Heart right ventricle (tissue), 16 donors: ENCODE measurements at regions of chr10 and their contacts with region 1.

Region 1: DNA sequence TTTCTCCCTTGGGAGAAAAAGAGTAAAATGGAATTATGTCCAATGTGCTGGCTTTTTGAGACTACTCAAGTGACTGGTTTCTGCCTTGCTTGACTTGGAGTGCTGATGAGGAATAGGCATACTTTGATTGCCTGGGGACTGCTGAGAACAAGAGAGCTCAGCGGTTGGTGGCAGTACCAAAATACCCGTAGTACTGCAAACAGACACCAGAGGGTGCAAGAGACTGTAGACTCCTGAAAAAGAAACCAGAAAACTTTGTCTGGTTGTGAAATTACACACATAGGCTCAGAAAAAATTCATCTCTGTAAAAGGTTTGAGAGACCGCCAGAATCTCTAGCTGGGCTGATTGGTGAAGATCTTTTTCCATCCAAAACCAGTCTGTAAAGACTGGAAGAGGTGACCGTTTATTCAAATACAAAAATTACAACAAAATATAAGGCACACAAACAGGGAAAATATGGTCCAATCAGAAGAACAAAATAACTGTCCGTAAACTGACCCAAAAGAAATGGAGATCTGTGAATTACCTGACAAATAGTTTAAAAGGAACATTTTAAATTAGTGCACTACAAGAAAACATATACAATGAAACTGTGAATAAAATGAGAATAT is 18.5 kb downstream of the BICC1 start:
- DNase-seq: peak in 1 of 2 donors; percentile 32
- ATAC-seq: no peak
- H3K4me3 ChIP-seq: no peak overlapping the region
- H3K27ac ChIP-seq: no peak overlapping the region
- H3K4me1 ChIP-seq: no peaks in the 10 kb centered on the region
- H3K27me3 ChIP-seq: no peaks in the 10 kb centered on the region
- CTCF ChIP-seq: peak; percentile 39 to 75 (median 64)

Region 2: DNA sequence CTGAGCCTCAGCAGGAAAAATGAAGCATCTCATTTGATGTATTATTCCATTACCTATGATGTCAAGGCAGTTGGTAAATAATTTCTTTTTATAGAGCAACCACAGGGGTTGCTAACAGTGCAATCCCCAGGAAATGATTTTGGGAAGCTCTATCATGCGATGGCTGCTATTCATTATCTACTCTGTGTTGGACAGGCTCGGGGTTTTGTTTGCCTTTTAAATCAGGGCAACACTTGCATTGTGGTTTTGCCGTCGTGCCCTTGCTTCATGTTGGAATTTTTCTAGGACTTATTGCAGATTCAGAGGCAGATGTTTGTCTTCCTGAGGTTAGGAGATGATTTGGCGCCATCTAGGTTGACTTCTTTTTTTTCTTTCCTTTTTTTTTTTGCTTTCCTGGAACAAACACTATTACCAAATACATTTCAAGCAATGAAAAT is 109.9 kb after region 1 on chr10:
- intact Hi-C with region 1: loop called in 1 of 10 experiments (anchors 10 kb)
- DNase-seq: no peak
- ATAC-seq: peak in 3 of 8 donors; percentile 18 to 21 (median 21)
- H3K4me3 ChIP-seq: no peak overlapping the region
- H3K27ac ChIP-seq: peak overlapping the region in 3 of 10 donors; percentile 5 to 30 (median 24)
- H3K4me1 ChIP-seq: peaks cover 0 to 38% (median 11%) of the 10 kb centered on the region in 9 donors
- H3K27me3 ChIP-seq: no peaks in the 10 kb centered on the region
- CTCF ChIP-seq: peak in 5 of 9 donors; percentile 11 to 44 (median 28)